ENCODE measurements at regions of chr6 and their contacts with region 1.

Region 1: GRCh38 chr6:4687989-4688947 is 87.9 kb upstream of the CDYL start:
- DNase-seq: peak; percentile 85
- H3K4me3 Mint-ChIP-seq: peak overlapping the region; percentile 70
- H3K27ac Mint-ChIP-seq: peak overlapping the region; percentile 94
- H3K4me1 Mint-ChIP-seq: peaks cover 14% of the 10 kb centered on the region
- H3K27me3 Mint-ChIP-seq: no peaks in the 10 kb centered on the region
- CTCF ChIP-seq: no peak

Region 2: DNA sequence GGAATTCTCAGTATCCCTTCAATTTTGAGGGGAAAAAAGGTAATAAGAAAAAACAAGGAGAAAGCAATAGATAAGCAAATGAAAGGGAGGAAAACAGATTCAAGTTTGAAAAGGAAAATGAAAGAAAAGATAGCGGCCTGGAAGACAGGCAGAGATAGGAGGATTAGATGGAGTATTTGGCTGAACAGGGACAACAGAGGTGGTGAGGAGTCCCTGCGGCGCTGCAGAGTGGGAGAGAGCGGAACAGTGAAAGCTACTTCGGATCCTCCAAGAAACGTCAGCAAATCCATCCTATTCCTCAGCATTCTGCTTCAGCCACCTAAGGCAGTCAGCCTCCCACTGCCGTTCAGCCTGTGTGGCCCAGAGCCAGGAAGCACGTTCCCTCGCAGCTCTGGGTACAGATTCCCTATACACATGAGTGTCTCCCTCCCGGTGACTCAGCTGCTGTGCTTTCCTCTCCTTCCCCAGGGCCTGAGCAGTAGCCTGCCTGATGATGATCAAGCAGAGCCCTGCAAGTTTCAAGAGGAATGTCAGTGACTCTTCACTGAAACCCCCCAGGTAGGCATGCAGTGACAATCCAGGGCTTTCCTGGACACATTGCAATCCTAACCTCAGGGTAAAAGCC is 44.5 kb after region 1 on chr6:
- CTCF ChIA-PET with region 1: no interaction called
- POLR2A ChIA-PET with region 1: interaction called, 4 read pairs
- intact Hi-C with region 1: loop called (anchors 2 kb)
- DNase-seq: peak; percentile 91
- H3K4me3 Mint-ChIP-seq: peak overlapping the region; percentile 67
- H3K27ac Mint-ChIP-seq: peak overlapping the region; percentile 68
- H3K4me1 Mint-ChIP-seq: peaks cover 22% of the 10 kb centered on the region
- H3K27me3 Mint-ChIP-seq: no peaks in the 10 kb centered on the region
- CTCF ChIP-seq: no peak